ENCODE measurements at regions of chr16 and their contacts with region 1.

Region 1: DNA sequence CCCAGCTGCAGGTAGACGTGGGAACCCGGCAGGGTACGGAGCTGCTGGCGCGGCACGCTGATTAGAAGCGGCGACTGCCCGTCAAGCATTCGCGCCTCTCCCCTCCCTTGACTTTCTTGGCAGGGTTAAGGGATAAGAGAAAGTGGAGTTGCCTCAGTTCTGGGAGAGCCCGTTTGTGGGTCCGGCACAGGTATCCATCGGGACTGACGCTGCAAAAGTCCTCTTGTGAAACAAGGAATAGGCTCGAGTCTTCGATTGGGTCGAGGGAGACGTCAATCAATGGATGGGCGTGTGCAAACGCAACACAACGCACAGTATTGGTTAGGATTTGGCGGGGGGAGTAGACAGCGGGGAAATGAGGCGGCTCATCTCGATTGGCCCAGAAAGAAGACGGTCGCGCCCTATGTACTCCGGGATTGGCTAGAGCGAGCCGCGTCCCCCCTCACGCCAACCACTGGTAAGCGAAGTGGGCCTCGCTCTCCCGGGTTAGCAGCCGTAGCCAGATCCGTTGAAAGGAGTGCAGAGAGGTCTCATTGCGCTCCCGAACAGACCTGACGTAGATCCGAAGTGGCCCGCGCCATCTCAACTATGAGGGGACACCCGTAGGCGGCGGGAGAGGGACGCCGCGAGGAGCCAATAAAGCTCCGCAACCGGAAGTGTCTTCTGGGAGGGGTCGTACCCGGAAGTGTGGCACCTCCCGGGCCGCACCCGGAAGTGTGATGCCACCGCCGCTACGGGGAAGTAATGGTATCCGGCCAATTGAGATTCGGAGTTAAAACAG is at the start of gene MON1B:
- DNase-seq: peak; percentile 96
- H3K4me3 Mint-ChIP-seq: peak within 1 kb of the TSS; percentile 86
- H3K27ac Mint-ChIP-seq: peak within 1 kb of the TSS; percentile 98
- H3K4me1 Mint-ChIP-seq: peaks cover 33% of the 10 kb centered on the region
- H3K27me3 Mint-ChIP-seq: no peaks in the 10 kb centered on the region
- total RNA-seq, gene MON1B: 63.7 to 70.2 TPM

Region 2: GRCh38 chr16:75555707-75556430 is 1634.8 kb before region 1 on chr16 and contains the start of gene TMEM231:
- CTCF ChIA-PET with region 1: no interaction called
- POLR2A ChIA-PET with region 1: no interaction called
- intact Hi-C with region 1: loop called (anchors 2 kb)
- DNase-seq: peak; percentile 98
- H3K4me3 Mint-ChIP-seq: peak within 1 kb of the TSS; percentile 88
- H3K27ac Mint-ChIP-seq: peak within 1 kb of the TSS; percentile 85
- H3K4me1 Mint-ChIP-seq: peaks cover 3% of the 10 kb centered on the region
- H3K27me3 Mint-ChIP-seq: peaks cover 4% of the 10 kb centered on the region
- total RNA-seq, gene TMEM231: 4.6 to 5.3 TPM

Region 3: DNA sequence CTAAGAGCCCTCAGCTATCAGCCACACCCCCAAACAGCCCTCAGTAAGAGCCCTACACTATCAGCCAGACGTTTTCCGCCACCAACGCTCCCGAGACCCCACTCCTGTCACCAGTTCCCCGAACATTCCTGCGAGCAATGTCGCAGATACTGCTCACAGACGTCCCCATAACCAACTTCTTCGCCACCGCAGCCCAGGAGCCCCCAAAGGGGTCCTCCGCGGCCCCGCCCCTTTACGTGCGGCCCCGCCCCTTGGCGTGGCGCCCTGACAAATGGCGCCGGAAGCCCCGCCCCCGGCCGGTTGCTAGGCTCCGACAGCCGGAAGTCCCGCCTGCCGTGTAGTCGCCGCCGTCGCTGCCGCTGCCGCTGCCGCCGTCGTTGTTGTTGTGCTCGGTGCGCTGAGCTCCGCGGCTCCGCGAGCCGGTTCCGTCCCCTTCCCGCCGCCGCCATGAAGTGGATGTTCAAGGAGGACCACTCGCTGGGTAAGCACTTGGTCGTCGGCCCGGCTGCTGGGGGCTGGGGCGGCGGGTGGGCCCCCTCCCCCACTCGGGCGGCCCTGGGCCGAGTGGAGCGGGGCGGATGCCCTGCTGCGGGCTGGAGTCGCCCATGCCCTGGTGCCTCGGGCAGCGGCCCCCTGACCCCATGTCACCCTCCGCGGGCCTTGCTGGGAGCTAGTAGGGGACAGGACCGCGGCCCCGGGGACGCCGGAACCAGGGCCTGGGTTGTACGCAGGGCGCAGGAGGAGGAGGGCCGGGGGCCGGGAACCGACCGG is 1624.4 kb before region 1 on chr16 and contains the start of gene GABARAPL2:
- CTCF ChIA-PET with region 1: no interaction called
- POLR2A ChIA-PET with region 1: no interaction called
- intact Hi-C with region 1: loop called (anchors 2 kb)
- DNase-seq: peak; percentile 92
- H3K4me3 Mint-ChIP-seq: peak within 1 kb of the TSS; percentile 94
- H3K27ac Mint-ChIP-seq: peak within 1 kb of the TSS; percentile 85
- H3K4me1 Mint-ChIP-seq: peaks cover 40% of the 10 kb centered on the region
- H3K27me3 Mint-ChIP-seq: peaks cover 7% of the 10 kb centered on the region
- total RNA-seq, gene GABARAPL2: 71.5 to 76.1 TPM

Region 4: GRCh38 chr16:77066896-77067496 is 123.7 kb before region 1 on chr16:
- CTCF ChIA-PET with region 1: no interaction called
- POLR2A ChIA-PET with region 1: no interaction called
- intact Hi-C with region 1: no loop called
- DNase-seq: no peak
- H3K4me3 Mint-ChIP-seq: no peak overlapping the region
- H3K27ac Mint-ChIP-seq: no peak overlapping the region
- H3K4me1 Mint-ChIP-seq: no peaks in the 10 kb centered on the region
- H3K27me3 Mint-ChIP-seq: peaks cover 2% of the 10 kb centered on the region

Region 5: GRCh38 chr16:77211880-77212740 is 21.4 kb after region 1 on chr16:
- CTCF ChIA-PET with region 1: no interaction called
- POLR2A ChIA-PET with region 1: interaction called, 5 read pairs
- intact Hi-C with region 1: loop called (anchors 1 kb)
- DNase-seq: peak; percentile 84
- H3K4me3 Mint-ChIP-seq: peak overlapping the region; percentile 74
- H3K27ac Mint-ChIP-seq: peak overlapping the region; percentile 34
- H3K4me1 Mint-ChIP-seq: peaks cover 12% of the 10 kb centered on the region
- H3K27me3 Mint-ChIP-seq: no peaks in the 10 kb centered on the region

Region 6: GRCh38 chr16:77308163-77308561 is 117.5 kb after region 1 on chr16:
- CTCF ChIA-PET with region 1: no interaction called
- POLR2A ChIA-PET with region 1: no interaction called
- intact Hi-C with region 1: loop called (anchors 1 kb)
- DNase-seq: no peak
- H3K4me3 Mint-ChIP-seq: no peak overlapping the region
- H3K27ac Mint-ChIP-seq: peak overlapping the region; percentile 72
- H3K4me1 Mint-ChIP-seq: peaks cover 18% of the 10 kb centered on the region
- H3K27me3 Mint-ChIP-seq: peaks cover 14% of the 10 kb centered on the region

Region 7: GRCh38 chr16:77722309-77723107 is 531.8 kb after region 1 on chr16 and contains the start of gene NUDT7:
- CTCF ChIA-PET with region 1: no interaction called
- POLR2A ChIA-PET with region 1: no interaction called
- intact Hi-C with region 1: loop called (anchors 1 kb)
- DNase-seq: peak; percentile 98
- H3K4me3 Mint-ChIP-seq: peak within 1 kb of the TSS; percentile 81
- H3K27ac Mint-ChIP-seq: peak within 1 kb of the TSS; percentile 79
- H3K4me1 Mint-ChIP-seq: peaks cover 13% of the 10 kb centered on the region
- H3K27me3 Mint-ChIP-seq: no peaks in the 10 kb centered on the region
- total RNA-seq, gene NUDT7: 8.2 to 10.1 TPM

Region 8: DNA sequence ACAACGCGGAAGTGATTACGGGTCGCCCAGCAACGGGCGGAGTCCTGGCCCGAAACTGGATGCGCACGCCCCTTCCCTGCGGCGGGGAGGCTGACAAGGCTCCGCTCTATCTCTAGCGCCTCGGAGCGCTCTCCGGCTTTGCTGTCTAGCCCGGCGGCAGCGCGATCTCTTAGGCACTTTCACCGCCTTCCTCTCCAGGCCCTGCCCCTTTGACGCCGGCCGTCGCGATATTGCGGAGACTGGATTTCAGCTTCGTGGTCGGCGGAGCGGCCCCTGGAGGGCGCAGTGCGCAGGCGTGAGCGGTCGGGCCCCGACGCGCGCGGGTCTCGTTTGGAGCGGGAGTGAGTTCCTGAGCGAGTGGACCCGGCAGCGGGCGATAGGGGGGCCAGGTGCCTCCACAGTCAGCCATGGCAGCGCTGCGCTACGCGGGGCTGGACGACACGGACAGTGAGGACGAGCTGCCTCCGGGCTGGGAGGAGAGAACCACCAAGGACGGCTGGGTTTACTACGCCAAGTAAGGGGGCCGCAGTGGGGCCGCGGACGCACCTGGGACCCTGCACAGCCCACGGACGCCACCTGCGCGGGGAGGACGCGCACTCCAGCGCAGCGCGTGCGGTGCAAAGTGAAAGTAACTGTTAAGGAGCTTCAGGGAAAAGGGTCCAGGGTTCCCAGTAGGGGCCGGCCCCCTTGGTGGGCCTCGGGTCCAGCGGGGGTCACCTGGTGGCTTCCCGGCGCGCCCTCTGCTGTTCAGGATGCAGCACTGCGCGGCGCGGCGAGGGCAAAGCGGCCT is 908.9 kb after region 1 on chr16 and contains the start of gene WWOX:
- CTCF ChIA-PET with region 1: no interaction called
- POLR2A ChIA-PET with region 1: no interaction called
- intact Hi-C with region 1: loop called (anchors 1 kb)
- DNase-seq: peak; percentile 97
- H3K4me3 Mint-ChIP-seq: peak within 1 kb of the TSS; percentile 86
- H3K27ac Mint-ChIP-seq: peak within 1 kb of the TSS; percentile 91
- H3K4me1 Mint-ChIP-seq: peaks cover 38% of the 10 kb centered on the region
- H3K27me3 Mint-ChIP-seq: peaks cover 5% of the 10 kb centered on the region
- total RNA-seq, gene WWOX: 14.3 to 16.5 TPM